ENCODE measurements at regions of chr6 and their contacts with region 1.

Region 1: DNA sequence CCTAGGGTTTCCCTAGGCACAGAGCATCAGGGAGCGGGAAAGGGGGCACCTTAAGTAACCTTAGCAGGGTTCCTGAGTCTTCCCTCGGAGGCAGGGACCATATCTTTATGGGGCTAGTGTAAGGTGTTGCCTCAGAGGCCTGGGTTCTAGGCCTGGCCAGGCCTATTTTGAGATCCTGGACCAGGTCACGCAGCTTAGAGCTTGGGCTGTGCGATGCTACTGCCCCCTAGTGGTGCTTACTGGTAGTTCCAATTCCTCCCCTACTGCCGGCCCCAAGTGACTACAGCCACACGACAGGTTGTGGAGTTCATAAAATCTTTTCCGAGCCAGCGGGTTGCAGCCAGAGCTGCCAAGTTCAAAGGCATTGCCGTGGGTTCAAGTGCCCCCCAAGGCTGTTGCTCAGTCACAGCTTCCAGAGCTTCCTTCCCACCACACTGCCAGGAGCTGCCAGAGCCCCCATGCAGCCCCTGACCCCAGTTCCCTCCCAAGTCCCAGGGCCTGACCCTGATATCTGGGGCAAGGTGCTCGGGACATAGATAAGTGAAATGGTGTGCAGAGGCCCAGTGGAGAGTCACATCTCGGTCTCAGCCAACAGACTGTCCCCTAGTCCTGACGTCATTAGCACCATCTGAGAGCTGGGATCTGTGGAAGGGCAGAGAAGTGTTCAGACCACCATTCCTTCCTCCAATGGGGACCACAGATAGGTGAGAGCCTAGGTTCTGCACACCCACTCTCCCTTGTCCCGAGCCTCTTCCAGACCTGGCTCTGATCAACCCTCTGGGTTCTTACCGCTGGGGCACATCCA is 3.3 kb downstream of the LRRC73 start:
- DNase-seq: peak; percentile 84

Region 2: GRCh38 chr6:41767156-41767833 is 1739.6 kb before region 1 on chr6:
- CTCF ChIA-PET with region 1: no interaction called
- POLR2A ChIA-PET with region 1: no interaction called
- DNase-seq: peak; percentile 80

Region 3: DNA sequence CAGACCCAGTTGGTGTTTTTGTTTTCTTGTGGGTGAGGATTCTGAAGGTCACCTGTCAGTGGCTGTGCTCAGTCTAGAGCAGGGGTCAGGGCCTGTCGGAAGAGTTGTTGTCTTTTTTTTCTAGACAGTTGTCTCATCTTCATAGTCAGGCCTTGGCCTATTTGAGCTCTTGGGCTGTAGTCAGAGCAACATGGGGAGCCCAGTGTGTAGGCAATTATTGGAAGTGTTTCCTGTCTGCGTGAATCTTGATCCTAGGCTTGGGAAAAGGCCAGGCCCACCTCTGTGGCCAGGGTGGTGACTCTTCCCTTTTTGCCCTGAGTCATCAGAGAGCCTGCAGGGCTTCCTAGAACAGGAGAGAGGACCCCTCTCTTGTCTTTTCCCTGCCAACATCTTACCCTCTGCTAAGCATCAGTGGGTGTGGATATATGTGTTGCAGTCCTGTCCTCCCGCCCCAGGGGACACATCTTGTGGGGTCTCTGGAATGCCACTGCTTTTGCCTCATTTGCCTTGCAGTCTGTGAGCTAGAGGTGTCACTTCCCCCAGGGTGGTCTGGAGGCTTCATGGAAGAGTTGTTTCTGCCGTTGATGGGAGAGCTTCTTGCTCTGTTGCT is 18.1 kb before region 1 on chr6:
- CTCF ChIA-PET with region 1: interaction called, 13 read pairs
- POLR2A ChIA-PET with region 1: interaction called, 3 read pairs
- DNase-seq: no peak

Region 4: GRCh38 chr6:43496370-43497128 is 10.3 kb before region 1 on chr6:
- CTCF ChIA-PET with region 1: interaction called, 17 read pairs
- POLR2A ChIA-PET with region 1: no interaction called
- DNase-seq: peak; percentile 58

Region 5: GRCh38 chr6:43516697-43517504 is 10.0 kb after region 1 on chr6 and contains the starts of genes POLR1C and YIPF3:
- CTCF ChIA-PET with region 1: interaction called, 3 read pairs
- POLR2A ChIA-PET with region 1: interaction called, 13 read pairs
- DNase-seq: peak; percentile 98